ENCODE measurements at regions of chr4 and their contacts with region 1.

Region 1: GRCh38 chr4:157854819-157855218 is 318.0 kb downstream of the GASK1B start:
- DNase-seq: no peak
- H3K4me3 ChIP-seq: no peak overlapping the region
- H3K27ac ChIP-seq: no peak overlapping the region
- H3K4me1 ChIP-seq: no peaks in the 10 kb centered on the region
- H3K27me3 ChIP-seq: no peaks in the 10 kb centered on the region
- CTCF ChIP-seq: no peak

Region 2: DNA sequence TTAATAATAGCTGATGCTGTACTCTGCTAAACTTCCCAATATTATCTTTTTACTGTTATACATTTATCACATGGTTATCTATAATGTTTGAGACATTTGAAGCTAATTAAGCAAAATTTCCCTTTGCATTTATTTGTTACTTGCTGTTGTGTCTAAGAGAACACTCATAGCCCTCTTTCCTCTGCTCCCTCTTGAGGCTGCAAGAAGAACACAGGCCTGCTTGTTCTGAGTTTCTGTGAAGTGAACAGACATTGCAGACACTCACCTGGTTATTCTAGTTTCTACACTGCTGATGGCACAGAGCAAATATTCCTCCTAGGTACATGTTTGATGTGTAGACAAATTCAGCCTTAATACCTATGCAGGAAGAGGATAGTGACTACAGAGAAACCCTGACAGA is 49.8 kb before region 1 on chr4:
- CTCF ChIA-PET with region 1: no interaction called
- dilution Hi-C with region 1: loop called (anchors 5 kb)
- in situ Hi-C with region 1: no loop called
- intact Hi-C with region 1: no loop called
- DNase-seq: peak; percentile 32
- H3K4me3 ChIP-seq: no peak overlapping the region
- H3K27ac ChIP-seq: no peak overlapping the region
- H3K4me1 ChIP-seq: peaks cover 2% of the 10 kb centered on the region
- H3K27me3 ChIP-seq: no peaks in the 10 kb centered on the region
- CTCF ChIP-seq: peak; percentile 33 to 70

Region 3: DNA sequence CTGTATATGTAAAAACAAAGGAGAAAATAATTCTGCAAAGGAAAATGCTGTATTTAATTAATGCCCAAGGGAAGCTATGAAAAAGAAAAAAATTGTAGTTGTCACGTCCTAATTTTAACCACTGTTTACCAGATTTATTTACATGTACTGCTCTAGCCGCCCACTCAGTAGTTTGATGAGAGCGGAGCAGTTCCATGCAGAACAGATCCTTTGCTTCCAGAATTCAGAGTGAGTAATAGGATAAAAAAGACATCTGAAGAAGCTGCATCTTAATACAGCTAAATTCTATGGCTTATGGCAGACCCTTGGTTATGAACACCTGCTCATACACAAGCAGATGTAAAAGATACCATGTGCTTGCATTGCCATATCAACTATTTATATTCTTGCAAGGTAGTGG is 31.0 kb after region 1 on chr4:
- CTCF ChIA-PET with region 1: no interaction called
- dilution Hi-C with region 1: loop called (anchors 5 kb)
- in situ Hi-C with region 1: no loop called
- intact Hi-C with region 1: no loop called
- DNase-seq: no peak
- H3K4me3 ChIP-seq: no peak overlapping the region
- H3K27ac ChIP-seq: no peak overlapping the region
- H3K4me1 ChIP-seq: no peaks in the 10 kb centered on the region
- H3K27me3 ChIP-seq: no peaks in the 10 kb centered on the region
- CTCF ChIP-seq: no peak

Region 4: DNA sequence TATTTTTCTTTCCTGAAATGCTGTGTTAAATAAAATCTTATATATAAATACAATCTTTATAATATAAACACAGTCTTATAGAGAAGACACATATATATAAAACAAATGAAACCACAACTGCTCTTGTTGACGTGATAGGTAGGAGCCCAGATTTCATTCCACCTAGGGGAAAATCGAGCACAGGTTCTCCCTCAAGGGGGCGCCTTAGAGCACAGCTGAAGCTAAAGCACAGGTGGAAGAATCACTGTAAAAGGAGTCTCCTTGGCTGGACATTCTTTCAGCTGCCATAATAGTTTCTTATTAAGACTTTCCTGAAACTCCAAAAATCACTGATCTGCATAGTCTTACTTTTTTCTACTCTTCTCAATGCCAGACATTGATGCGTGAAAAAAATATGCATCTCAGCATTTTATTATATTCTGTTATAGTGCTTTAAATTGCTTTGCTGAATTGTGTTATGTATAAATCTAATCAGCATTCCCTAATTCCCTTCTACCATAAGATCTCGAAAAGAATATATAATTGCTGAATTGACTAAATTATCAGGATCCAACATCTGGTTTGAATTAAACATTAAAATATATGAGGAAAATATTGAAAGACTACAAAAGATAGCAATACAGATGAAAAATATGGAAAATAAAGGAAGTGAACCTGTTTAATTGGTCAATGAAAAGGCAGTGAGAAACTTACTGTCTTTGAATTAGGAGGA is 641.4 kb after region 1 on chr4:
- CTCF ChIA-PET with region 1: no interaction called
- dilution Hi-C with region 1: no loop called
- in situ Hi-C with region 1: no loop called
- intact Hi-C with region 1: no loop called
- DNase-seq: no peak
- H3K4me3 ChIP-seq: no peak overlapping the region
- H3K27ac ChIP-seq: no peak overlapping the region
- H3K4me1 ChIP-seq: no peaks in the 10 kb centered on the region
- H3K27me3 ChIP-seq: no peaks in the 10 kb centered on the region
- CTCF ChIP-seq: peak; percentile 53 to 68

Measured in mammary epithelial cell (primary cell).